Astrocyte of the cerebellum (primary cell): ENCODE measurements at regions of chr6 and their contacts with region 1.

Region 1: GRCh38 chr6:167898673-167899311 is 72.1 kb downstream of the AFDN start:
- DNase-seq: peak; percentile 22
- H3K4me3 ChIP-seq: no peak overlapping the region
- CTCF ChIP-seq: peak; percentile 62

Region 2: GRCh38 chr6:167493976-167494697 is 404.7 kb before region 1 on chr6:
- in situ Hi-C with region 1: loop called (anchors 10 kb)
- DNase-seq: no peak
- H3K4me3 ChIP-seq: no peak overlapping the region
- CTCF ChIP-seq: no peak